IMR-90 (cell line): ENCODE measurements at regions of chr6 and their contacts with region 1.

Region 1: GRCh38 chr6:82363351-82364086 is at the start of gene TPBG:
- DNase-seq: peak; percentile 82
- ATAC-seq: peak; percentile 67
- H3K4me3 ChIP-seq: peak within 1 kb of the TSS; percentile 68
- H3K27ac ChIP-seq: peak within 1 kb of the TSS; percentile 98
- H3K4me1 ChIP-seq: peaks cover 8% of the 10 kb centered on the region
- H3K27me3 ChIP-seq: no peaks in the 10 kb centered on the region
- CTCF ChIP-seq: peak; percentile 34
- POLR2A ChIP-seq: peak; percentile 92
- RAD21 ChIP-seq: peak; percentile 23; the same call in 1 of the 2 replicates
- total RNA-seq, gene TPBG: 19.7 and 20.0 TPM in 2 replicates

Region 2: GRCh38 chr6:82396964-82397751 is 33.6 kb after region 1 on chr6:
- CTCF ChIA-PET with region 1: interaction called, 4 read pairs
- POLR2A ChIA-PET with region 1: no interaction called
- dilution Hi-C with region 1: no loop called
- in situ Hi-C with region 1: no loop called
- intact Hi-C with region 1: loop called (anchors 1 kb)
- DNase-seq: peak; percentile 98
- ATAC-seq: peak; percentile 76
- H3K4me3 ChIP-seq: no peak overlapping the region
- H3K27ac ChIP-seq: peak overlapping the region; percentile 1; the same call in 1 of the 2 replicates
- H3K4me1 ChIP-seq: peaks cover 6% of the 10 kb centered on the region
- H3K27me3 ChIP-seq: no peaks in the 10 kb centered on the region
- CTCF ChIP-seq: no peak
- POLR2A ChIP-seq: no peak
- RAD21 ChIP-seq: no peak